H1 (cell line): ENCODE measurements at regions of chr18 and their contacts with region 1.

Region 1: DNA sequence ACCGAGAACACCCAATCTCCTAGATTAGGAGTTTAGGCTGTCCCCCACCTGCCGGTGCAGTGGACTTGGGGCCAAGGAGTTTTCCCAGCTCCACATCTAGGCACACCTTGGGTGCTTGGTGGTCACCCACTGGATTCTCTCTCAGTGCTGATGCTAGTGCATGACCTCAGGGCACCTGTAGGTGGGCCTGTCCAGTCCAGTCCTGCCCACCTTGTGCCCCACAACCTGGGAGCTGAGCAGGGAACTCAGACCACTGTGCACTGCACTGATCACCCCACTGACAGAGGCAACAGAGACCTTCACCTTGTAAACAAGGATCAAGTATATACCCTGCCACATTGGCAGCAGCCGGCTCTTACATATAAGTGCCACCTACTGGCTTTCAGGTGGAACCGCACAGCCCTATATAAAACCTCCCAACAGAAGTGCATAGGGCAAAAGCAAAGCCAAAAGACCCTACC is 12.7 kb upstream of the CDH19 start:
- DNase-seq: peak in 1 of 2 experiments; percentile 52
- H3K4me3 ChIP-seq: no peak overlapping the region
- H3K27ac ChIP-seq: no peak overlapping the region
- H3K4me1 ChIP-seq: no peaks in the 10 kb centered on the region
- H3K27me3 ChIP-seq: no peaks in the 10 kb centered on the region
- CTCF ChIP-seq: peak; percentile 30 to 71 (median 70)
- EP300 ChIP-seq: no peak
- POLR2A ChIP-seq: no peak
- RAD21 ChIP-seq: peak; percentile 56 to 75

Region 2: GRCh38 chr18:66560092-66560491 is 56.5 kb before region 1 on chr18:
- CTCF ChIA-PET with region 1: interaction called, 15 read pairs
- POLR2A ChIA-PET with region 1: no interaction called
- DNase-seq: no peak
- H3K4me3 ChIP-seq: no peak overlapping the region
- H3K27ac ChIP-seq: no peak overlapping the region
- H3K4me1 ChIP-seq: no peaks in the 10 kb centered on the region
- H3K27me3 ChIP-seq: no peaks in the 10 kb centered on the region
- CTCF ChIP-seq: peak in 2 of 3 experiments; percentile 44; a peak in 2 of 4 replicates
- EP300 ChIP-seq: no peak
- POLR2A ChIP-seq: no peak
- RAD21 ChIP-seq: peak; percentile 60 to 65

Region 3: GRCh38 chr18:66571845-66572244 is 44.7 kb before region 1 on chr18:
- CTCF ChIA-PET with region 1: no interaction called
- POLR2A ChIA-PET with region 1: no interaction called
- DNase-seq: no peak
- H3K4me3 ChIP-seq: no peak overlapping the region
- H3K27ac ChIP-seq: no peak overlapping the region
- H3K4me1 ChIP-seq: 0 out of 7 replicates have a peak, but pooled peaks cover 0 to 1% (median 0%) of the 10 kb centered on the region in 4 experiments
- H3K27me3 ChIP-seq: no peaks in the 10 kb centered on the region
- CTCF ChIP-seq: no peak
- EP300 ChIP-seq: no peak
- POLR2A ChIP-seq: no peak
- RAD21 ChIP-seq: no peak

Region 4: GRCh38 chr18:66582211-66582610 is 34.3 kb before region 1 on chr18:
- CTCF ChIA-PET with region 1: interaction called, 10 read pairs
- POLR2A ChIA-PET with region 1: no interaction called
- DNase-seq: no peak
- H3K4me3 ChIP-seq: no peak overlapping the region
- H3K27ac ChIP-seq: no peak overlapping the region
- H3K4me1 ChIP-seq: no peaks in the 10 kb centered on the region
- H3K27me3 ChIP-seq: no peaks in the 10 kb centered on the region
- CTCF ChIP-seq: no peak
- EP300 ChIP-seq: no peak
- POLR2A ChIP-seq: no peak
- RAD21 ChIP-seq: no peak